CD4-positive, alpha-beta memory T cell (primary cell): ENCODE measurements at regions of chr13 and their contacts with region 1.

Region 1: DNA sequence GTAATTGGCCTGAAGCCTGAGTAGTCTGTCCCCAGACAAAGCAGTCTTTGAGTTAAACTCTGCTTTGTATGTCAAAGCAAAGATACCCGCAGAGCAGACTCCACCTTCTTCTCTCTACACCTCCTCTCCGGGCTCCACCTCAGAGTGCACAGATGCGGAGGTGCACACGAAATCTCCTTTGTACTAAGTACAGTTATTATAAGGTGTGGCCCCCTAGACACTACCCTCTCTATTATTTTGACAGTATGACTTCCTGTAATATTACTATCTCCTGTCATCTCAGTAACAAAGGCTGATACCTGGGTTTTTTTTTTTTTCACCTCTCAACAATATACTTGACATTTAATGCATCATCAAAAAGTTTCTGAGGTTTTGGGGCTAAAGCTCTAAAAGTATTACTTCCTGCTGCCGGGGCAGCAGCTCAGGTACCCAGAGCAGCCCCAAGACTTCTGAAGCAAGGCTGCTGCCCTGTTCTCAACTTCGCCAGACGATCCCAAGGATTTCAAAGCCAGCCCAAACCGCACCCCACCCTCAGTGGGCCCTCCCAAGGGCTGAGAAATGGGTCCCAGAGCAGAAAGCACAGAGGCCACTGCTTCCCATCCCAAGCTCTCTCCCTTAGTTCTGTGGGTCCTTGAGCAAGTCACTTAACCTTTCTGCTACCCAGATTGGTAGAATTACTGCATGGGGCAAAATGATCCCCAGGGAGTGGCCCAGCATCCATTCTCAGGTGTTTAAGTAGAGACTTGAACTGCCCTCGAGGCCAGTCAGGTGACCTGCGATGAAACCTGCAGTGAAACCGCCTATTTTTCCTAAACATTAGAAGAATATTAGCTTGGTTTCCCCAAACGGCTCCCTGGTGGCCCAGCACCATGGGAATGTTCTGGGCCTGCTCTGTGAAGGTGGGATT is 180.6 kb downstream of the FOXO1 start:
- DNase-seq: peak; percentile 81 to 92 (median 91)
- H3K4me3 ChIP-seq: peak overlapping the region; percentile 0 to 29
- H3K4me3 Mint-ChIP-seq: peak overlapping the region; percentile 59 to 93 (median 82)
- H3K27ac ChIP-seq: peak overlapping the region; percentile 68
- H3K27ac Mint-ChIP-seq: peak overlapping the region; percentile 89 to 99 (median 98)
- H3K4me1 ChIP-seq: peaks cover 87% of the 10 kb centered on the region
- H3K4me1 Mint-ChIP-seq: peaks cover 53 to 96% (median 85%) of the 10 kb centered on the region in 4 donors
- H3K27me3 ChIP-seq: no peaks in the 10 kb centered on the region
- H3K27me3 Mint-ChIP-seq: no peaks in the 10 kb centered on the region

Region 2: GRCh38 chr13:39942552-39943273 is 543.2 kb before region 1 on chr13:
- CTCF ChIA-PET with region 1: interaction called, 3 read pairs
- POLR2A ChIA-PET with region 1: no interaction called
- intact Hi-C with region 1: loop called (anchors 5 kb)
- DNase-seq: peak; percentile 55 to 67 (median 63)
- H3K4me3 ChIP-seq: no peak overlapping the region
- H3K4me3 Mint-ChIP-seq: peak overlapping the region in 1 of 8 donors; percentile 20
- H3K27ac ChIP-seq: no peak overlapping the region
- H3K27ac Mint-ChIP-seq: peak overlapping the region in 1 of 7 donors; percentile 43
- H3K4me1 ChIP-seq: no peaks in the 10 kb centered on the region
- H3K4me1 Mint-ChIP-seq: peaks cover 3 to 13% (median 6%) of the 10 kb centered on the region in 4 donors
- H3K27me3 ChIP-seq: no peaks in the 10 kb centered on the region
- H3K27me3 Mint-ChIP-seq: peaks cover 0 to 1% of the 10 kb centered on the region in 2 donors

Region 3: GRCh38 chr13:40206241-40207000 is 279.4 kb before region 1 on chr13:
- CTCF ChIA-PET with region 1: no interaction called
- POLR2A ChIA-PET with region 1: interaction called, 11 read pairs
- intact Hi-C with region 1: no loop called
- DNase-seq: peak; percentile 56 to 70 (median 65)
- H3K4me3 ChIP-seq: peak overlapping the region in 1 of 2 donors; percentile 21
- H3K4me3 Mint-ChIP-seq: peak overlapping the region; percentile 46 to 89 (median 78)
- H3K27ac ChIP-seq: peak overlapping the region; percentile 53
- H3K27ac Mint-ChIP-seq: peak overlapping the region; percentile 90 to 99 (median 98)
- H3K4me1 ChIP-seq: peaks cover 60% of the 10 kb centered on the region
- H3K4me1 Mint-ChIP-seq: peaks cover 47 to 81% (median 61%) of the 10 kb centered on the region in 4 donors
- H3K27me3 ChIP-seq: no peaks in the 10 kb centered on the region
- H3K27me3 Mint-ChIP-seq: no peaks in the 10 kb centered on the region

Region 4: GRCh38 chr13:40438999-40439797 is 46.7 kb before region 1 on chr13:
- CTCF ChIA-PET with region 1: interaction called, 4 read pairs
- POLR2A ChIA-PET with region 1: interaction called, 6 read pairs
- intact Hi-C with region 1: loop called (anchors 2 kb)
- DNase-seq: peak in 2 of 5 donors; percentile 22 to 29
- H3K4me3 ChIP-seq: no peak overlapping the region
- H3K4me3 Mint-ChIP-seq: peak overlapping the region; percentile 58 to 87 (median 80)
- H3K27ac ChIP-seq: no peak overlapping the region
- H3K27ac Mint-ChIP-seq: peak overlapping the region; percentile 8 to 89 (median 77)
- H3K4me1 ChIP-seq: peaks cover 45% of the 10 kb centered on the region
- H3K4me1 Mint-ChIP-seq: peaks cover 28 to 48% (median 34%) of the 10 kb centered on the region in 4 donors
- H3K27me3 ChIP-seq: no peaks in the 10 kb centered on the region
- H3K27me3 Mint-ChIP-seq: no peaks in the 10 kb centered on the region

Region 5: GRCh38 chr13:40534456-40534855 is 48.6 kb after region 1 on chr13:
- CTCF ChIA-PET with region 1: no interaction called
- POLR2A ChIA-PET with region 1: interaction called, 4 read pairs
- intact Hi-C with region 1: loop called (anchors 5 kb)
- DNase-seq: no peak
- H3K4me3 ChIP-seq: no peak overlapping the region
- H3K4me3 Mint-ChIP-seq: no peak overlapping the region
- H3K27ac ChIP-seq: no peak overlapping the region
- H3K27ac Mint-ChIP-seq: peak overlapping the region in 1 of 7 donors; percentile 35
- H3K4me1 ChIP-seq: peaks cover 16% of the 10 kb centered on the region
- H3K4me1 Mint-ChIP-seq: peaks cover 18 to 29% (median 25%) of the 10 kb centered on the region in 4 donors
- H3K27me3 ChIP-seq: no peaks in the 10 kb centered on the region
- H3K27me3 Mint-ChIP-seq: no peaks in the 10 kb centered on the region

Region 6: DNA sequence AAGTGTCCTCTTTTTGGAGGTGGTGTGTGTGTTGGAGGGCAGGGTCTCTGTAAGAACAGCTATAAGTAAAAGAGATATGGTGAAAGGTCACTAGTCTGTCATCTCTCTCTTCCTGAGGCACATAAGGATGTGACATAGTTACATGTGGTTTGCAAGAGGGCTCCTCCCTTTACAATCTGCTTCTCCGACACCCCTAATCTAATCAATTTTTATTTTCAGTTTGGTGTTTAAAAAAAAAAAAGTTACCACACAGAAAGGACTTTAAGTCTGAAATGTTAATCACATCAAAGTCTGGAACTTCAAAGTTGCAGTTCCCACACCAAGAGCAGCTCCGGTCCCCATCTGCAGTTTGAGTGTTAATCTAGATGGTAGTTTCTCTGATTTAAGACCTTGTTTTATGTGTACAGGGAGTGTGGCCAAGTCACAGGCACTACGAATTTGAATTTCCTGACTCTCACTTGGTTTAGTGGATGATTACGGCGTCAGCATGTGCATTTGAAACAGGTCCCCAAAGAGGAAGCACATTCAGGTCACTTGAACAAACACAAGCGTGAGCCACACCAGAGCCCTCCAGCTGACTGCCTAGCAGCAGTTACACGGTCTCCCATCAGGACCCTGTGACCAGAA is 127.4 kb after region 1 on chr13:
- CTCF ChIA-PET with region 1: no interaction called
- POLR2A ChIA-PET with region 1: interaction called, 10 read pairs
- intact Hi-C with region 1: loop called (anchors 1 kb)
- DNase-seq: peak; percentile 78 to 85 (median 84)
- H3K4me3 ChIP-seq: peak overlapping the region in 1 of 2 donors; percentile 43
- H3K4me3 Mint-ChIP-seq: peak overlapping the region; percentile 81 to 94 (median 86)
- H3K27ac ChIP-seq: peak overlapping the region; percentile 68
- H3K27ac Mint-ChIP-seq: peak overlapping the region; percentile 89 to 99 (median 95)
- H3K4me1 ChIP-seq: peaks cover 96% of the 10 kb centered on the region
- H3K4me1 Mint-ChIP-seq: peaks cover 68 to 97% (median 88%) of the 10 kb centered on the region in 4 donors
- H3K27me3 ChIP-seq: no peaks in the 10 kb centered on the region
- H3K27me3 Mint-ChIP-seq: no peaks in the 10 kb centered on the region